GM12878 (cell line): ENCODE measurements at regions of chrX and their contacts with region 1.

Region 1: DNA sequence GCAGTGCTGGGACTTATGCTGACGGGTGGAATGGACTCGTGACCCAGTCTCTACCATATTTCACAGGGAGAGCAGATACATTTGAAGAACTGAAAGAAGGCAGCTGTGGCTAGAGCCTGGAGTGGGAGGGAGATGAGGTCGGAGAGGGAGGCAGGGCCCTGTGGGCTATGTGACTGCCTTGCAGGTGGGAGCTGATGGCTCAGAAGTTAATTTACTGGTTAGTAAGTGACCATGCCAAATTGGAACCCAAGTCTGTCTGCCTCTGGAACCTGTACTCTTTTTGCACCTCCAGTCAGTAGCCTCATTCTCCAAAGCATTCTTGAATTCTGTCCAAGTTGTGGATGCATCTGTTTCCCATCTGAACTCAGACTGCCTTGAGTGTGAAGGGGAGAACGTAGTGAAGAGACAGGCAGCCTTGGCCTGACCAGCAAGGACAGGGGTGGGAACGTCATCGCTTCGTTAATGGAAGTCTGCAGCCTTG is 92.3 kb downstream of the REPS2 start:
- DNase-seq: no peak
- ATAC-seq: peak; percentile 89
- H3K4me3 ChIP-seq: no peak overlapping the region
- H3K27ac ChIP-seq: no peak overlapping the region
- H3K4me1 ChIP-seq: no peaks in the 10 kb centered on the region
- H3K27me3 ChIP-seq: 0 out of 4 replicates have a peak, but pooled peaks cover 0 to 2% of the 10 kb centered on the region in 2 experiments
- CTCF ChIP-seq: no peak
- EP300 ChIP-seq: no peak
- POLR2A ChIP-seq: no peak
- RAD21 ChIP-seq: no peak

Region 2: DNA sequence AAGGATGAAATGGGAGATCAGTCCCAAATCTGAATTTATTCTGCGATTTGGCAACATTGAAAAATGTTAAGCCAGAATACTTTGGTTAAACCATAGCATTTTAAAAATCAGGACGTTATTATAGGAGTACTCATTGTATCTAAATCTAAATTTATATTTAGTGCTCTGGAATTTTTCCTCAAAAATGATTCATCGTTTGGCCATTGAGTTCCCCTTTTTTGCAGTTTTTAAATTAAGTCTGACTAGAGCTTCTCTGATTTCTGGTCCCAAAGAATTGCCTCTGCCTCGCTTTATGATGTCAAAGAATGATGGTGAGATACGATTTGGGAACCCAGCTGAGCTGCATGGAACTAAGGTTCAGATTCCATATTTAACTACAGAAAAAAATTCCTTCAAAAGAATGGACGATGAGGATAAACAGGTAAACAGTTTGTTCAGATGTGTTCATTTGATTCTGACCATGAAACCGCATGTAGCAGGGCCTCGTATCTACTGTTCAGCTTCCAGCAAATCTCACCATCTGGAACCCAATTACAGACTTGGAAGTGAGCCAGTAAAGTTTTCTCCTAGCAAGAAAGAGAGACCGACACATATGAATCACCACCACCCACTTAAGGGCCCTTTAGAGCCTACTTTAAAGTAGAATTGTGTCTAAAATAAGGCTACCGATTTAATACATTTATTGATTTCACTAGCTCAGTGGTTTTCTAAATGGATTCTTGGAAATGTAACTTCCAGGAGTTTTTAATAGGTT is 16.7 kb before region 1 on chrX:
- CTCF ChIA-PET with region 1: interaction called, 4 read pairs
- POLR2A ChIA-PET with region 1: interaction called, 11 read pairs
- RAD21 ChIA-PET with region 1: interaction called, 3 read pairs
- SMC1A ChIA-PET with region 1: interaction called, 11 read pairs
- in situ Hi-C with region 1: no loop called
- intact Hi-C with region 1: no loop called
- DNase-seq: no peak
- ATAC-seq: no peak
- H3K4me3 ChIP-seq: no peak overlapping the region
- H3K27ac ChIP-seq: no peak overlapping the region
- H3K4me1 ChIP-seq: no peaks in the 10 kb centered on the region; the same call in 1 of the 2 replicates
- H3K27me3 ChIP-seq: no peaks in the 10 kb centered on the region
- CTCF ChIP-seq: no peak
- EP300 ChIP-seq: no peak
- POLR2A ChIP-seq: no peak
- RAD21 ChIP-seq: no peak

Region 3: DNA sequence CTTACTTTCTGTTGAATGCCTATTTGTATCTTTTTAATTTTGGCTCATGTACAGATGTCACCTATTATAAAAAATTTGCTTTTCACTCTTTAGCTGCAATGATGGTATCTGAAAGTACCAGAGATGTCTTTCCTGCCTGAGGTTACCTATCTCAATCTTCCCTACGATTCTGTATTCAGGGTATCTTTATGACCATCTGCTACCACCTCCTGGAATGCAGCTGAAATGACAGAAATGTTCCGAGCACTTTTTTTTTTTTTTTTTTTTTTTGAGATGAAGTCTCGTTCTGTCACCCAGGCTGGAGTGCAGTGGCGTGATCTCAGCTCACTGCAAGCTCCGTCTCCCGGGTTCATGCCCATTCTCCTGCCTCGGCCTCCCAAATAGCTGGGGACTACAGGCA is 44.1 kb after region 1 on chrX:
- CTCF ChIA-PET with region 1: no interaction called
- POLR2A ChIA-PET with region 1: no interaction called
- RAD21 ChIA-PET with region 1: no interaction called
- SMC1A ChIA-PET with region 1: no interaction called
- in situ Hi-C with region 1: no loop called
- intact Hi-C with region 1: no loop called
- DNase-seq: no peak
- ATAC-seq: peak; percentile 56
- H3K4me3 ChIP-seq: no peak overlapping the region
- H3K27ac ChIP-seq: no peak overlapping the region
- H3K4me1 ChIP-seq: no peaks in the 10 kb centered on the region
- H3K27me3 ChIP-seq: no peaks in the 10 kb centered on the region; a peak in 1 of 4 replicates
- CTCF ChIP-seq: peak in 1 of 3 experiments; percentile 14; a peak in 1 of 6 replicates
- EP300 ChIP-seq: no peak
- POLR2A ChIP-seq: no peak
- RAD21 ChIP-seq: peak; percentile 49

Region 4: GRCh38 chrX:17160971-17161370 is 122.2 kb after region 1 on chrX:
- CTCF ChIA-PET with region 1: no interaction called
- POLR2A ChIA-PET with region 1: no interaction called
- RAD21 ChIA-PET with region 1: no interaction called
- SMC1A ChIA-PET with region 1: no interaction called
- in situ Hi-C with region 1: no loop called
- intact Hi-C with region 1: no loop called
- DNase-seq: no peak
- ATAC-seq: no peak
- H3K4me3 ChIP-seq: no peak overlapping the region
- H3K27ac ChIP-seq: no peak overlapping the region
- H3K4me1 ChIP-seq: no peaks in the 10 kb centered on the region
- H3K27me3 ChIP-seq: no peaks in the 10 kb centered on the region
- CTCF ChIP-seq: no peak
- EP300 ChIP-seq: no peak
- POLR2A ChIP-seq: no peak
- RAD21 ChIP-seq: 0 out of 2 replicates have a peak, but pooled peaks have one; percentile 11